Ascending aorta (tissue), 2 donors: ENCODE measurements at regions of chr11 and their contacts with region 1.

Region 1: GRCh38 chr11:6315811-6316425 is 4.4 kb downstream of the CAVIN3 start:
- DNase-seq: peak in 1 of 2 donors; percentile 75
- H3K4me3 ChIP-seq: peak overlapping the region; percentile 26 to 28
- H3K27ac ChIP-seq: peak overlapping the region; percentile 98 to 99
- H3K4me1 ChIP-seq: peaks cover 12 to 23% of the 10 kb centered on the region in 2 donors
- H3K27me3 ChIP-seq: no peaks in the 10 kb centered on the region
- CTCF ChIP-seq: peak; percentile 73 to 89 (median 85)

Region 2: DNA sequence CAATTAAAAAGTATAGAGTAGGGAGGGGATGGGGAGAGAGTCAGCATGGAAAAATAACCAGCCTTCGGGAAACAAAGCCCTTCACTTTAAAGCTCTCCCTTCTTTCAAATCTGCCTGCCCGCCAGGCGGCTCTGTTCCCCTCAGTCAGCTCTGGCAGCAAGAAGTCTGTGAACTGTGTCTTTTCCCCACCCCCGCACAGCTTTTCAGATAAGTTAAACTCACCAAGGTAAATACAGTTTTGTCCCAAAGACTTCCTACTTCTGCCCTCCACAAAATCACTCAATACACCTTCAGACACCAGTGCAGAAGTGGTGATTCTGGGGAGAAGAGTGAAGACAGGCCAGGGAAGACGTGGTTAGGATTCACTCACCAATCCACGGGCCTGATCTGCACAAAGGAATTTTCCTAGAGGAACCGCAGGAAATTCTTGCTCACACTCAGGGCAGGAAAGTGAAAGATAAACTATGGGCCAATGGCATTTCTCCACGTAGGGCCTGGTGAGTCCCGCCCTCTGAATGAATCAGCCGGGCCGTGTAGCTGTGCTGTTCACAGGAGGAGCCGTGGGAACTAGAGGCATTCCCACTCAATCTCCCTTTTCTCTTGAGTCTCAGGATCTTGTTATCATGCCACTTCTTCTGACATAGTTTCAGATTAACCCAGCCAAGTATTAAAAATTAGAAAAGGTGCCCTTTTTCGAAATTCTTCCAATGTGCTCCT is 631.1 kb before region 1 on chr11 and contains the start of gene TRIM5:
- intact Hi-C with region 1: loop called (anchors 10 kb)
- DNase-seq: peak; percentile 70 to 96
- H3K4me3 ChIP-seq: peak within 1 kb of the TSS; percentile 60 to 64
- H3K27ac ChIP-seq: peak within 1 kb of the TSS; percentile 88 to 94
- H3K4me1 ChIP-seq: peaks cover 3 to 12% of the 10 kb centered on the region in 2 donors
- H3K27me3 ChIP-seq: no peaks in the 10 kb centered on the region
- CTCF ChIP-seq: peak; percentile 48 to 72 (median 55)
- total RNA-seq, gene TRIM5: 45.1 TPM

Region 3: GRCh38 chr11:6132431-6132830 is 183.5 kb before region 1 on chr11:
- intact Hi-C with region 1: no loop called
- DNase-seq: no peak
- H3K4me3 ChIP-seq: no peak overlapping the region
- H3K27ac ChIP-seq: no peak overlapping the region
- H3K4me1 ChIP-seq: no peaks in the 10 kb centered on the region
- H3K27me3 ChIP-seq: no peaks in the 10 kb centered on the region
- CTCF ChIP-seq: no peak

Region 4: GRCh38 chr11:6298605-6299004 is 17.3 kb before region 1 on chr11:
- intact Hi-C with region 1: loop called (anchors 2 kb)
- DNase-seq: no peak
- H3K4me3 ChIP-seq: no peak overlapping the region
- H3K27ac ChIP-seq: no peak overlapping the region
- H3K4me1 ChIP-seq: no peaks in the 10 kb centered on the region
- H3K27me3 ChIP-seq: no peaks in the 10 kb centered on the region
- CTCF ChIP-seq: peak; percentile 17 to 55 (median 41)

Region 5: GRCh38 chr11:6362873-6363678 is 47.2 kb after region 1 on chr11:
- intact Hi-C with region 1: loop called (anchors 1 kb)
- DNase-seq: peak; percentile 47 to 93
- H3K4me3 ChIP-seq: peak overlapping the region in 1 of 2 donors; percentile 7
- H3K27ac ChIP-seq: peak overlapping the region; percentile 88 to 92
- H3K4me1 ChIP-seq: peaks cover 9 to 18% of the 10 kb centered on the region in 2 donors
- H3K27me3 ChIP-seq: no peaks in the 10 kb centered on the region
- CTCF ChIP-seq: peak; percentile 80 to 93 (median 87)

Region 6: DNA sequence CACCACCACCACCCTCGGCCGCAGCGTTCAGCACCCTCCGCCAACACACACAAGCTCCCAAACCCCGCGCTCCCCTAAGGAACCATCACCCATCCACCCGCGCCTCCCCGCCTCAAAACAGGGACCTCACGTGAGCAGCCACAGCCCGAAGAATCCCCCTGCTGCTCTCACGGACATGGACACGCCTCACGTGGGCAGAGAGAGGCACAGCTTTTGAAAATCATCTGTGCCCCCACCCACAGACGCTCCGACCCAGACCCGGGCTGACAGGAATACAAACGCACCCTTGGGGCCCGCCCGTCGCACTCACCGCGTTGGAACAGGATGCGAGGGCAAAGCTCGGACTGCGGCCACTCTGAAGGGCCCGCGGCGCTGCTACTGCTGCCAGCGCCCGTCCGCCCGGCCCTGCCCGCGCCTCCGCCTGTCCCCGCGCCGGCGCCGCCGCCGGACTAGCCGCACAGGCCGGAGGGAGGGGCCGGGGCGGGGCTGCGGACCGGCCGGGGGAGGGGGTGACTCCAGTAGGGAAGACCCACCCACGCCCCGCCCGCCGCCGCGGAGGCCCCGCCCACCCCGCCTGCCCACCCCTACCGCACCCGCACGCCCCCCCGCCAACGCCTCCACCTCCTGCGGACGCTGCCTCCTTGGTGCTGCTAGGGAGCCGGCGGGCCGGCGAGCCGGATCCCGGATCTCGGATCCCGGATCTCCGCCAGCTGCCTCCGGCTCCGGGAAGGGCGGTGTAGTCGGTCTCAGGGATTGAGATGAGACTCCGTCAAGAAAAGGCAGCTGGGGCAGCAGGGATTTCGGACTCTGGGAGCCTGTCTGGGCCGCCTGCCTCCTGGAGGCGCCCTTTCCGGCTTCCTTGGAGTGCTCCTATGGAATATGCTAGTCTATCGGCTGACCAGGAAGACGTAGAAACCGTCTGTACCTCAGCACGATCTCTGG is 157.8 kb after region 1 on chr11 and contains the start of gene TRIM3:
- intact Hi-C with region 1: loop called (anchors 2 kb)
- DNase-seq: peak; percentile 74 to 96
- H3K4me3 ChIP-seq: peak within 1 kb of the TSS; percentile 85 to 88
- H3K27ac ChIP-seq: peak within 1 kb of the TSS; percentile 94 to 96
- H3K4me1 ChIP-seq: peaks cover 7 to 24% of the 10 kb centered on the region in 2 donors
- H3K27me3 ChIP-seq: no peaks in the 10 kb centered on the region
- CTCF ChIP-seq: peak in 2 of 3 experiments; percentile 22 to 39
- total RNA-seq, gene TRIM3: 33.8 TPM

Region 7: DNA sequence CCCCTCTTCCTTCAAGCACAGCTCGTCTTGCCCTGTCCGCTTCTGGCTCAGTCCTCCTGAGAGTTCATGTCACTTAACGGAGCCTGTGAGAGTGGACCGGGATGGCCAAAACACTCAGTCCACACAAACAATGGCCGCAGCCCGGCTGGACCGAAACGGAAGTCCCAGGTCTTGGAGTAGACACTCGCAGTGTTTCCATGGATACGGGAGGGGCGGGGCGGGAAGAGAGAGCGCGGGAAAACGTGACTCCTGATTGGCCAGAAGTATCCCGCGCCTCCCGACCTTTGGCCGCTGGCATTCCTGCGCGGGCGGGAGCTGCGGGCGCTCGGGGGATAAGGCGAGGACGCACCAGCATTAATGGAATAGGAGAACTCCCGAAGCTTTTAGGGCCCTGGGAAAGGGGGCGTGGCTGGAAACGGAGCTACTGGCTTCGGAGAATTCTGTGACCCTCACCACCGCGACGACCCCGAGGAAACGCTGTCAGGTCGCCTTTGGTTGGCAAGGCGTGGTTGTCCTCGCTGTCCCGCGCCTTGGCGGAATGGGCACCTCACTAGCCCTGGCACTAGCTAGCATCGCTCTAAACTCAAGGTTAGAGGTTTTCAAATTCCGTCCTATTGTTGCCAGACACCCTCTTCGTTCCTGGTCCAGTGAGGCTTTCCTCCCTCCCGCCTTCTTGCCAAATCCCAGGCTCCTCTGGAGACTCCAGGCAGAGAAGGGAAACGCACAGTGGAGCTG is 704.4 kb after region 1 on chr11 and contains the starts of genes NLRP14 and ZNF214:
- intact Hi-C with region 1: no loop called
- DNase-seq: peak; percentile 58 to 96
- H3K4me3 ChIP-seq: peak within 1 kb of the TSS; percentile 71 to 75
- H3K27ac ChIP-seq: peak within 1 kb of the TSS; percentile 67 to 83
- H3K4me1 ChIP-seq: peaks cover 0 to 8% of the 10 kb centered on the region in 2 donors
- H3K27me3 ChIP-seq: no peaks in the 10 kb centered on the region
- CTCF ChIP-seq: no peak
- total RNA-seq, gene NLRP14: not detected
- total RNA-seq, gene ZNF214: not detected